ENCODE measurements at regions of chr2 and their contacts with region 1.

Region 1: GRCh38 chr2:10493636-10494281 is 45.6 kb upstream of the ODC1 start:
- DNase-seq: peak; percentile 98
- H3K4me3 Mint-ChIP-seq: no peak overlapping the region
- H3K27ac Mint-ChIP-seq: peak overlapping the region; percentile 77
- H3K4me1 Mint-ChIP-seq: peaks cover 27% of the 10 kb centered on the region
- H3K27me3 Mint-ChIP-seq: peaks cover 15% of the 10 kb centered on the region
- CTCF ChIP-seq: no peak

Region 2: DNA sequence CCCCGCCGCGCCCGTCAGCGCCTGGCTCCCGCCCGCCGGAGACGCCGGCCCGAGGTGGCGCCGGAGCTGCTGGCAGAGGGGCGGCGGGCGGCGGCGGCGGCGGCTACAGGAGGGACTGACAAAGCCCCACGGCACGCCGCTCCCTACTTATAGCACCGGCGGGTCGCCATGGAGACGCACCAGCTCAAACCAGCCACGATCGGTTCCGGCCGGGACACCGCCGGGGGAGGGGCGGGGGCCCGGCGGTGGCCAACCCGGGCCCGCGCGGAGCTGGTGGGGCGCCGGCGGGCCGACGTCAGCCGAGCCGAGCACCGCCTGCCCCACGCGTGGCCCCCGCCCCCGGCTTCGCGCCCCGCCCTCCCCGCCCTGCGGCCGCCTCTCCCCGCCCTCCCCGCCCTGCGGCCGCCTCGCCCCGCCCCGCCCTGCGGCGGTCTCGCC is 45.5 kb before region 1 on chr2 and contains the start of gene ODC1:
- CTCF ChIA-PET with region 1: interaction called, 5 read pairs
- POLR2A ChIA-PET with region 1: interaction called, 10 read pairs
- intact Hi-C with region 1: loop called (anchors 2 kb)
- DNase-seq: peak; percentile 86
- H3K4me3 Mint-ChIP-seq: peak within 1 kb of the TSS; percentile 93
- H3K27ac Mint-ChIP-seq: peak within 1 kb of the TSS; percentile 91
- H3K4me1 Mint-ChIP-seq: peaks cover 14% of the 10 kb centered on the region
- H3K27me3 Mint-ChIP-seq: no peaks in the 10 kb centered on the region
- CTCF ChIP-seq: no peak
- total RNA-seq, gene ODC1: 321 and 341 TPM in 2 replicates

Region 3: GRCh38 chr2:10452956-10453904 is 40.5 kb before region 1 on chr2:
- CTCF ChIA-PET with region 1: interaction called, 5 read pairs
- POLR2A ChIA-PET with region 1: interaction called, 10 read pairs
- intact Hi-C with region 1: loop called (anchors 2 kb)
- DNase-seq: no peak
- H3K4me3 Mint-ChIP-seq: peak overlapping the region; percentile 23
- H3K27ac Mint-ChIP-seq: peak overlapping the region; percentile 72
- H3K4me1 Mint-ChIP-seq: peaks cover 41% of the 10 kb centered on the region
- H3K27me3 Mint-ChIP-seq: no peaks in the 10 kb centered on the region
- CTCF ChIP-seq: no peak

Region 4: GRCh38 chr2:10514743-10515142 is 21.0 kb after region 1 on chr2:
- CTCF ChIA-PET with region 1: no interaction called
- POLR2A ChIA-PET with region 1: interaction called, 9 read pairs
- intact Hi-C with region 1: loop called (anchors 2 kb)
- DNase-seq: peak; percentile 97
- H3K4me3 Mint-ChIP-seq: peak overlapping the region; percentile 38
- H3K27ac Mint-ChIP-seq: peak overlapping the region; percentile 87
- H3K4me1 Mint-ChIP-seq: peaks cover 10% of the 10 kb centered on the region
- H3K27me3 Mint-ChIP-seq: no peaks in the 10 kb centered on the region
- CTCF ChIP-seq: no peak

Region 5: DNA sequence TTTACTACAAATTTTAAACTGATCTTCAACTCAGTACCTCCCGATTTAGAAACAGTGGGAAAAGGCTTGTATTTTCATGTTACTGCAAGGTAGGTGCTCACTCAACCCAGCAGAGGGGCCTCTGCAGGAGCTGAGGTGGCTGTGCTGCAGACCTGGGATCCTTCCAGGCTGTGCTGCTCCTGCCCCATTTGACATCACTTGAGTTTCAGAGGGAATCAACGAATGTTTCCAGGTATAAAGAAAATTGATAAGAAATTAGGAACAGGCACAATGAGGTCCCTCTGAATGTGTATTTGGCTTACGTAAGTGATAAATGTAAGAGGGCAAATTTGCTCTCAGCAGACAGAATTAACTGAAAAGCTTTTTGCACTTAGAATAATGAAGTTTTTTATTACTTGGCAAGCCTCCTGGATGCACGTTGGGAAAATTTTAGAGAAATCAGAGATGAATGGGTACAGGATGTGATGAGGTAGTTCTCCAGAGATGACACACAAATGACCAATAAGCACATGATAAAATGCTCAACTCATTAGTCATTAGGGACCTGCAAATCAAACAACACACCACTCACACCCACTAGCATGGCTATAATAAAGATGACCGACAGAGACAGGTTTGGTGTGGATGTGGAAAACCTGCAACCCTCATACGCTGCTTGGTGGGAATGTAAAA is 82.0 kb after region 1 on chr2:
- CTCF ChIA-PET with region 1: no interaction called
- POLR2A ChIA-PET with region 1: no interaction called
- intact Hi-C with region 1: loop called (anchors 10 kb)
- DNase-seq: peak; percentile 47
- H3K4me3 Mint-ChIP-seq: no peak overlapping the region
- H3K27ac Mint-ChIP-seq: peak overlapping the region; percentile 12
- H3K4me1 Mint-ChIP-seq: peaks cover 11% of the 10 kb centered on the region
- H3K27me3 Mint-ChIP-seq: no peaks in the 10 kb centered on the region
- CTCF ChIP-seq: no peak